ENCODE measurements at regions of chr20 and their contacts with region 1.

Region 1: DNA sequence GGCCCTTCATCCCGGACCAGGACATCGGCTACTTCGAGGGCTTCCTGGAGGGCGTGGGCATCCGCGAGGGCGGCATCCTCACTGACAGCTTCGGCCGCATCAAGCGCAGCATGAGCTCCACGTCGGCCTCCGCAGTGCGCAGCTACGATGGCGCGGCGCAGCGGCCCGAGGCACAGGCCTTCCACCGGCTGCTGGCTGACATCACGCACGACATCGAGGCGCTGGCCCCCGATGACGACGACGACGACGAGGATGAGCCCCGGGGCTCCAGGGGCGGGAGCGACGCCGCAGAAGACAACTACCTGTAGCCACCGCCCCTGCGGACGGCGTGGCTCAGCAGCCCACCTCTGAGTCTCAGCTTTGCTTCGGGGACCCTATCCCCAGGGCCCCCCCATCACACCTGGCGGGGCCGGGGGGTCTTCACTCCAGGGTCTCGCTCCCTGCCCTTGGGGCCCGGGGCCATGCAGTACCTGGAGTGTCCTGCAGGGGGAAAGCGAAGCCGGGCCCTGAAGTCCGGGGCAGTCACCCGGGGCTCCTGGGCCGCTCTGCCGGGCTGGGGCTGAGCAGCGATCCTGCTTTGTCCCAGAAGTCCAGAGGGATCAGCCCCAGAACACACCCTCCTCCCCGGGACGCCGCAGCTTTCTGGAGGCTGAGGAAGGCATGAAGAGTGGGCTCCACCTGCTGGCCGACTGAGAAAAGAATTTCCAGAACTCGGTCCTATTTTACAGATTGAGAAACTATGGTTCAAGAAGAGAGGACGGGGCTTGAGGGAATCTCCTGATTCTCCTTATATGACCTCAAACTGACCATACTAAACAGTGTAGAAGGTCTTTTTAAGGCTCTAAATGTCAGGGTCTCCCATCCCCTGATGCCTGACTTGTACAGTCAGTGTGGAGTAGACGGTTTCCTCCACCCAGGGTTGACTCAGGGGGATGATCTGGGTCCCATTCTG is 20.8 kb upstream of the HCK start:
- DNase-seq: peak; percentile 71
- ATAC-seq: peak; percentile 97
- H3K4me3 ChIP-seq: peak overlapping the region; percentile 20 to 38
- H3K27ac ChIP-seq: peak overlapping the region; percentile 29; the same call in 1 of the 2 replicates
- H3K4me1 ChIP-seq: peaks cover 15% of the 10 kb centered on the region
- H3K27me3 ChIP-seq: no peaks in the 10 kb centered on the region; the same call in 1 of the 2 replicates
- CTCF ChIP-seq: peak; percentile 100

Region 2: DNA sequence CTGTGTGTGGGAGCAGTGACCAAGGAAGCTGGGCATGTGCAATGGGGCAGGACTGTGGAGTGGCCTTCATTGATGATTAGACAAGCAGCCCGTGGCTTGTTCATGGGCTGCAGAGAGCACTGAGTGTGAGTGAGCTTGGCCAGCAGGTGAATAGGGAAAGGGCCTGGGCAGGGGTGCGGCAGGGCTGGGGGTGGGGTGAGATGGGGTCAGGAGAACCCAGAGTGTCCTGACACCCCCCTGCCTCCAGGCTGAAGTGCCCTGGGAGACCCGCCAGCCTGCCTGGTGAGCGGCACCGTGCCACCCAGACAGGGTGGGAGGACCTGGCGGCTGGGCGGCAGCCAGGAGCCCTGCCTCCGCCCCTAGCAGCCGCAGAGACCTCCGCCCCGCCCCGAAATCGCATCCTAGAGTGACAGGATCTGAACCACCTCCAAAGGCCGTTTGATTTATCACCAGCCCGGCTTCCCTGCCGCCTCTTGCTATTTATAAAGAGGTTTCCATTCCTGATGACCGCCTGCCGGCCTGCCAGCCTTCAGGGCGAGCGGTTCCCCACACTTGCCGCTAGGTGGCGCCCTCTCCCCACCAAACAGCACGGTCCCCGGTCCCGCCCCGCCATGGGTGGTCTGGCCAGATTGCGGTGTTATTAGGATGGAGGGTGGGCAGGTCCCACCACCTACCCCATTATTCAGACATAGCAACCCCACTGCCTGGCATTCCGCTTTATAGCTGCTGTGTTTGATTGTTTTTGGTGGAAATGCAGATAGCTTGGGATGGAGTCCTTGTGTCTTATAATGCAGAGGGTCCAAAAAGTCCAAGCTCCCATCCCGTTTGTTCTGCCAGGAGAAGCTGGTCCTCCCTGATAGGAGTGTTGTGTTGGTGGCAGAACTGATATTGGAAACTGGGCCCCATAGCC is 208.6 kb before region 1 on chr20:
- CTCF ChIA-PET with region 1: interaction called, 11 read pairs
- POLR2A ChIA-PET with region 1: no interaction called
- in situ Hi-C with region 1: no loop called
- intact Hi-C with region 1: loop called (anchors 1 kb)
- DNase-seq: no peak
- ATAC-seq: peak; percentile 89
- H3K4me3 ChIP-seq: peak overlapping the region; percentile 14 to 44
- H3K27ac ChIP-seq: no peak overlapping the region
- H3K4me1 ChIP-seq: peaks cover 12% of the 10 kb centered on the region
- H3K27me3 ChIP-seq: no peaks in the 10 kb centered on the region
- CTCF ChIP-seq: peak; percentile 100

Region 3: DNA sequence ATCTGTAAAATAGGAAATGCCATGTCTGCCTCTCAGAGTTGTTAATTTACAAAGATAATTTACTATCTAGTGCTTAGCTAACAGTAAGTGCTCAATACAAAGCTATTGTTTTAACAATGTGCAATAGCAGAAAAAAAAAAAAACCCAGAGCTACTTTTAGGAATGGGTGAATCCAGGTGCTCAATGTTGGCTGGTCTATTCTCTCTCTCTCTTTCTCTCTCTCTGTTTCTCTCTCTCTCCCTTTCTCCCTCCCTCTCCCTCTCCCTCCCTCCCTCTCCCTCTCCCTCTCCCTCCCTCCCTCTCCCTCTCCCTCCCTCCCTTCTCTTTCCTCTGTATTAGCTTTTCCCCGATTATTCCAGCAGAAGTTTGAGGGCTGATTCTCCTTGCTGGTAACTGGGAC is 93.5 kb before region 1 on chr20:
- CTCF ChIA-PET with region 1: interaction called, 11 read pairs
- POLR2A ChIA-PET with region 1: interaction called, 3 read pairs
- in situ Hi-C with region 1: no loop called
- intact Hi-C with region 1: no loop called
- DNase-seq: no peak
- ATAC-seq: no peak
- H3K4me3 ChIP-seq: no peak overlapping the region
- H3K27ac ChIP-seq: no peak overlapping the region
- H3K4me1 ChIP-seq: 0 out of 2 replicates have a peak, but pooled peaks cover 3% of the 10 kb centered on the region
- H3K27me3 ChIP-seq: no peaks in the 10 kb centered on the region
- CTCF ChIP-seq: no peak

Region 4: DNA sequence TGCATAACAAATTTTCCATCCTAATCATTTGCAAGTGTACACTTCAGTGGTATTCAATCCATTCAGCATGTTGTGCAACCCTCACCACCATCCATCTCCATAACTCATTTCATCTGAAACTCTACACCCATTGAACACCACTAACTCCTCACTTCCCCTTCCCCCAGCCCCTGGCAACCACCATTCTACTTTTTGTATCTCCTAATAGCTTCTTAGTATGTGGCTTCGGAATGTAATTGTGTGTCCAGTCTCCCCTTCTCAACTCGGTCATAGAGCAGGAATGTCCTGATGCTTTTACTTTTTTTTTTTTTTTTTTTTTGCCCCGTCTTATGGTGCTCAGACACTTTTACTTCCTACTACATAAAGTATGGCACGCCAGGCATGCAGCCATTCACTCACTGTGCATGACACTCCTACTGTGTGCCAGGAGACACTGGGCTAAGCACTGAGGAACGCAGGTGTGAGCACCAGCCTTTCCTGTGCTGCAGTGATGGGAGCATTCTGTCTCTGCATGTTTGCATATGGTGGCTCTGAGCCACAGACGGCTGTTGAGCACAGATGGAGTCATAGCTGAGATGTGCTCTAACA is 36.0 kb after region 1 on chr20:
- CTCF ChIA-PET with region 1: no interaction called
- POLR2A ChIA-PET with region 1: no interaction called
- in situ Hi-C with region 1: no loop called
- intact Hi-C with region 1: loop called (anchors 5 kb)
- DNase-seq: no peak
- ATAC-seq: no peak
- H3K4me3 ChIP-seq: no peak overlapping the region
- H3K27ac ChIP-seq: no peak overlapping the region
- H3K4me1 ChIP-seq: no peaks in the 10 kb centered on the region
- H3K27me3 ChIP-seq: peaks cover 8% of the 10 kb centered on the region; the same call in 1 of the 2 replicates
- CTCF ChIP-seq: no peak

Region 5: DNA sequence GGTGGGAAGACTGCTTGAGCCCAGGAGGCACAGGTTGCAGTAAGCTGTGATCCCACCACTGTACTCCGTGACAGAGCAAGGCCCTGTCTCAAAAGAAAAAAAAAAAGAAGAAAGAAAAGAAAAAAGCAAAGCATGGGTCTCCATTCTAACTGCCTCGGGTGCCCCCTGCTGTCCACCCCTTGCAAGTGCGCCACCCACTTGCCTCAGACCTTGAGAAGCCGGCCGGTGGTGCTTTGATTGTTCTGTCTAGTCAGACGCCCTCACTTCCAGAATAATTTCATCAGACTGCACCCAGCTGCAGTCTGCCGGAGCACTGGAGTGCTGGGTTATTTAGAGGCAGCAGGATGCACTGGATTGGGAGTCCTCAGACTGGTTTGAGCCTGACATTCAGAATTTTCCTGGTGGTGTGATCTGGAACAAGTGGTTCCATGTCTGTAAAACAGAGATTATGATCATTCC is 60.6 kb after region 1 on chr20:
- CTCF ChIA-PET with region 1: interaction called, 13 read pairs
- POLR2A ChIA-PET with region 1: interaction called, 5 read pairs
- in situ Hi-C with region 1: no loop called
- intact Hi-C with region 1: loop called (anchors 5 kb)
- DNase-seq: peak; percentile 67
- ATAC-seq: peak; percentile 83
- H3K4me3 ChIP-seq: no peak overlapping the region
- H3K27ac ChIP-seq: no peak overlapping the region
- H3K4me1 ChIP-seq: no peaks in the 10 kb centered on the region
- H3K27me3 ChIP-seq: peaks cover 3% of the 10 kb centered on the region; the same call in 1 of the 2 replicates
- CTCF ChIP-seq: peak; percentile 100

Region 6: GRCh38 chr20:32125506-32125905 is 94.2 kb after region 1 on chr20:
- CTCF ChIA-PET with region 1: no interaction called
- POLR2A ChIA-PET with region 1: no interaction called
- in situ Hi-C with region 1: no loop called
- intact Hi-C with region 1: no loop called
- DNase-seq: no peak
- ATAC-seq: no peak
- H3K4me3 ChIP-seq: no peak overlapping the region
- H3K27ac ChIP-seq: no peak overlapping the region
- H3K4me1 ChIP-seq: no peaks in the 10 kb centered on the region
- H3K27me3 ChIP-seq: no peaks in the 10 kb centered on the region
- CTCF ChIP-seq: no peak

Measured in Panc1 (cell line).